ENCODE measurements at regions of chr18 and their contacts with region 1.

Region 1: DNA sequence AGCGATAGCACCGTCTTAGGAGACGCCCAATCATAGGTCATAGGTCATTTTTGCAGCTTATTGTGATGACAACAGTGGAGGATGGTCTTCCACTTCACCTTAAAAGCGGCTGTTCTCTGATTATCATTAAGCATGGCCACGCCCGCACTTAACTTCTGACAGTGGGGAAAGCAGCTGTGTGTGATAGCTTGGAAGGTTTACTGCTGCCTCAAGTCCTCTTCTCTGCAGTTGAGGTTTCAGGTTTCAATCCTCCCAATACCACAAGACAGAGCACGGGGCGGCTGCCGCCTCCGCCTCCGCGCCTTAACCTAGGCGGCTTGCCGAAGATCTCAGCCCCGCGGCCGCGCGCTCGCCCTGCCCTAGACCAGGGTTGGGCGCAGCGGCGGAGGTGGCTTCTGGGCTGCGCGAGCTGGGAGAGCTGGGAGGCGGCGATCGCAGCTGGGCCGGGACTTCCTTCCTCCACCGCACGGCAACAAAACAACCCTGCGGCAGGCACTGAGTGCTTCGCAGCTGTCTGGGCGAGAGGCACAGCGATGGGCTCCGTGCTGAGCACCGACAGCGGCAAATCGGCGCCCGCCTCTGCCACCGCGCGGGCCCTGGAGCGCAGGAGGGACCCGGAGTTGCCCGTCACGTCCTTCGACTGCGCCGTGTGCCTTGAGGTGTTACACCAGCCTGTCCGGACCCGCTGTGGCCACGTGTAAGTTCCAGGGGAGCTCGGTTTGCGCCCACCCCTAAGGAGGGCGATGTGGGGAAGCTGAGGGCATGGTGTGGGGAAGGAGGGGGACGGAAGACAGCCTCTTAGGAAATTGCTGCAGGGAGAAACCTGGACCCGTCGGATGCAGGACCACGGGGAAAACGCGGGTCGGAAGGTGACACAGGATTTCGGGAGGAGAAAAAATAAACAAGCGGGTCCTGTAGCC is at the start of gene RNF125:
- DNase-seq: peak; percentile 73
- ATAC-seq: peak; percentile 85
- H3K4me3 Mint-ChIP-seq: peak within 1 kb of the TSS; percentile 93
- H3K27ac Mint-ChIP-seq: peak within 1 kb of the TSS; percentile 89
- H3K4me1 Mint-ChIP-seq: peaks cover 21% of the 10 kb centered on the region
- H3K27me3 Mint-ChIP-seq: no peaks in the 10 kb centered on the region
- CTCF ChIP-seq: no peak
- total RNA-seq, gene RNF125: 2.1 and 3.1 TPM in 2 replicates

Region 2: DNA sequence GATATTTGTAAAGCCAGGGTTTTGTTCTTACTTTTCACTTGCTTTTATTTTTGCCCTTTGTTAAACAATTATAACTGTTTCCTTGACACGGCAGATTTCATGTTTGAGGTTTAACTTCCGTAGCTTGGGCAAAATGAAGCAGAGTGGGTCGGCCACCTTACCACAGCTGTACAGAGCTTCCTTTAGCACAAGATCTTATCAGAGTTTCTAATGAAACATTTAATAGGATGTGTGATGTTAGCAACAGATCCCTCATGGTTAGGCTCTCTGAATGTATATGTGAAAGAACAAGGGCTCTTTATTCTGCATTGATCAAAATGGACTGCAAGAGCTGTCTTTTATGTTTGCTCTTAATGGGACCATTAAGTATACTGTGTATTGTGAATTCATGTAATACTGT is 22.3 kb after region 1 on chr18:
- CTCF ChIA-PET with region 1: no interaction called
- POLR2A ChIA-PET with region 1: interaction called, 10 read pairs
- intact Hi-C with region 1: loop called (anchors 1 kb)
- DNase-seq: no peak
- ATAC-seq: peak; percentile 54
- H3K4me3 Mint-ChIP-seq: peak overlapping the region; percentile 17
- H3K27ac Mint-ChIP-seq: peak overlapping the region; percentile 67
- H3K4me1 Mint-ChIP-seq: peaks cover 41% of the 10 kb centered on the region
- H3K27me3 Mint-ChIP-seq: no peaks in the 10 kb centered on the region
- CTCF ChIP-seq: no peak

Region 3: GRCh38 chr18:32048507-32049091 is 30.0 kb after region 1 on chr18:
- CTCF ChIA-PET with region 1: interaction called, 5 read pairs
- POLR2A ChIA-PET with region 1: interaction called, 20 read pairs
- intact Hi-C with region 1: loop called (anchors 2 kb)
- DNase-seq: peak; percentile 18
- ATAC-seq: peak; percentile 61
- H3K4me3 Mint-ChIP-seq: peak overlapping the region; percentile 30
- H3K27ac Mint-ChIP-seq: peak overlapping the region; percentile 80
- H3K4me1 Mint-ChIP-seq: peaks cover 29% of the 10 kb centered on the region
- H3K27me3 Mint-ChIP-seq: no peaks in the 10 kb centered on the region
- CTCF ChIP-seq: no peak

Region 4: DNA sequence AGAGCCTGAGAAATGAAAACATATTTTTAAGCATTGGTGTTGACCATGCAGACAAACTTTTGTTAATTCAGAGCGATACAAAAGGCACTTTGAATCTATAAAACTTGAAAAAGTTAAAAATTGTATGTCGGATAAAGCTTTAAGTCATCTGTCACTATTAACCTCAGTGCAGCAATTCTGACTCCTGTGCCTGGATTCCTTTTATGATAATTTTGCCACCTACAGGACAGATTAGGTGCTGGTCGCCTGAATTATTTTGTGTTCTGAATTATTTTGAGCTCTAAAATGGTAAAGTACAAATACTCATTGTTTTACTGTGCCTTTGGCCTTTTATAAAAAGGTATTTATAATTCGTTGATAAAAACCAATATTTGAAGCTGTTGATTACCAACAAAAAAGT is 53.7 kb after region 1 on chr18:
- CTCF ChIA-PET with region 1: interaction called, 25 read pairs
- POLR2A ChIA-PET with region 1: interaction called, 3 read pairs
- intact Hi-C with region 1: loop called (anchors 1 kb)
- DNase-seq: no peak
- ATAC-seq: peak; percentile 28
- H3K4me3 Mint-ChIP-seq: no peak overlapping the region
- H3K27ac Mint-ChIP-seq: no peak overlapping the region
- H3K4me1 Mint-ChIP-seq: no peaks in the 10 kb centered on the region
- H3K27me3 Mint-ChIP-seq: no peaks in the 10 kb centered on the region
- CTCF ChIP-seq: no peak

Region 5: DNA sequence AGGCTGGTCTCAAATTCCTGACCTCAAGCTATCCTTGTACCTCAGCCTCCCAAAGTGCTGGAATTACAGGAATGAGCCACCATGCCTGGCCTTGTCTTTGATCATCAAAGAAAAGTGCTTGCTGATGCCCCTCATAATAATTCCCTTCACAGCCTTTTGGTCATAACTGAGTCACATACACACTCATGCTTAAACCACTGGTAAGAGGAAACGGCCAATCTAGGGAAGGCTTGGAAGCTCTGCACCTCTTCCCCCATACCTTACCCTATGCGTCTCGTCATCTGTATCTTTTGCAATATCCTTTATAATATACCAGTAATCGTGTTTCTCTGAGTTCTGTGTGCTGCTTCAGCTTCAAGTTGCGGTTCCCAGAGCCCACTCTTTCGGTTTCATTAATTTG is 68.3 kb after region 1 on chr18:
- CTCF ChIA-PET with region 1: interaction called, 4 read pairs
- POLR2A ChIA-PET with region 1: interaction called, 85 read pairs
- intact Hi-C with region 1: loop called (anchors 1 kb)
- DNase-seq: no peak
- ATAC-seq: no peak
- H3K4me3 Mint-ChIP-seq: no peak overlapping the region
- H3K27ac Mint-ChIP-seq: no peak overlapping the region
- H3K4me1 Mint-ChIP-seq: peaks cover 23% of the 10 kb centered on the region
- H3K27me3 Mint-ChIP-seq: no peaks in the 10 kb centered on the region
- CTCF ChIP-seq: no peak

Region 6: DNA sequence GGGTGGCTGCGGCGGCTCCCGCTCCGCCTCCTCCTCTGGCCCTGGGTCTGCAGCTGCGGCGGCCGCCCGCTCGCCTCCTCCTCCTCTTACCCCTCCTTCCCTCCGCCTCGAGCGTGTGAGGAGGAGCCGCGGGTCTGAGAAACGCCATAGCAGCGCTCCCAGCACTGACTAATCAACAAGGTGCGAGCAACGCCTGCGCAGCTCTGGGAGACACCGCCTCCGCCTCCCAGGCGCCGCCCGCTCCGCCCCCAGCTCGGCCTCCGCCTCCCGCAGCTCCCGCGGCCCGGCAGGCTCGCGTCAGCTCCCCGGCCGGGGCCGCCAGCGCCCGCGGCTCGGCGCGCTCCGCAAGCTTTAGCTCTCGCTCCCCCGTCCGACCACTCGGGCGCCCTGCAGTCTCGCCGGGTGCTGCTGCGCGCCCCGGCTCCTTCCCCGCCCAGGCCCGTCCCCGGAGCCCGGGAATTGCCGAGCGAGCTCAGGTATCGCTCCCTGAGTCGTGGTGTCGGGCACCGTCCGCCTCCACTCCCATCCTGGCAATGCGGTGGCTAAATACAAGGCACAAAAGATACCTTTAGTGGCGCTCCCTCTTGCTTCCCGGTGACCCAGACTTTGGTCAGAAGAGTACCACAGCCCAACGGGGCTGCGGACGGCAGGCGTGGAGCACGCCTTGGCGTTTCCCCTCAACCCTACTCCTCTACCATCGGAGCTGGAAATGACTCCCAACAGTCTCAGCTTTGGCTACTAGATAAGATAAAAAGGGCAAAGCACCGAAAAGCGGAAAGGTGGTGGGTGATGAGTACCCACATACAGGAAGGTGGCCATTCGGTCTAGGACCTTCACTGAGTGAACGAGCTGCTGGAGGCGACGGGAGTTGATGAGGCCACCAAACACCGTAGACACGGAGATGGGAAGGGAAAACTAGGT is 452.4 kb after region 1 on chr18 and contains the start of gene GAREM1:
- CTCF ChIA-PET with region 1: no interaction called
- POLR2A ChIA-PET with region 1: no interaction called
- intact Hi-C with region 1: loop called (anchors 10 kb)
- DNase-seq: peak; percentile 67
- ATAC-seq: peak; percentile 95
- H3K4me3 Mint-ChIP-seq: peak within 1 kb of the TSS; percentile 83
- H3K27ac Mint-ChIP-seq: no peak within 1 kb of the TSS
- H3K4me1 Mint-ChIP-seq: peaks cover 27% of the 10 kb centered on the region
- H3K27me3 Mint-ChIP-seq: peaks cover 53% of the 10 kb centered on the region
- CTCF ChIP-seq: no peak
- total RNA-seq, gene GAREM1: not detected in 2 replicates